ENCODE measurements at regions of chr5 and their contacts with region 1.

Region 1: DNA sequence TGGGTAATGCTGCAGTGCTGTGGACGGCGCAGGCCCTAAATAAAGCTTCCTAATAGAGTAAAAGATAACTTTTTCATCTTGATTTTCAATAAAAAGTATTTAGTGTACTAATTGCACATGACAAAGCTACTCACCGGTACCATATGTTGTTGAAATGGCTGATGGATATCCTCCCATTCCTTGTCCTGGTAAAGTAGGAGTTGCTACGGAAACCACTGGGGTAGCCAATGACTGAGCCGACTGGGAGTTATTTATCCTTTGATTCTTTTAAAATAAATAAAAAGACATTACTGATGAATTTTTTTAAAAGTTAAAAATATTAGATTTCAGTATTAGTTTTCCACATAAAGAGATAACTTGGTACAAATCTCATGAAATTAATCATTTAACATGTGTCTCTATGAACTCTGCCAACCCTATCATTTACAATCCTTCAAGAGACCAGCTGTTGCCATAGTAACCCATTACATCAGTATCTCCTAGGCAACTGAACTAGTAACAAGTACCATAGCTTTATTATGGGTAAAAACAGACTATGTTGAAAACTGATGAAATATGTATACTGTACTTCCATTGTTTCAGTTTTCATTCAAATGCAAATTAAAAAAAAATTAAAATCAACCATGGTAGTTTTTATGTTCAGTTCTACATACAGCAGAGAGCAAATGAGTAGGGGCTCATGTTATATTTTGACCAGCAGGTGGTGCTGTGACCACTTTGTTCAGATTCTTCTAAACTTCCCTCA is 153.7 kb downstream of the MEF2C start:
- DNase-seq: peak; percentile 43 to 82 (median 58)
- ATAC-seq: peak; percentile 86
- H3K4me3 ChIP-seq: no peak overlapping the region
- H3K27ac ChIP-seq: no peak overlapping the region
- H3K4me1 ChIP-seq: peaks cover 0 to 4% of the 10 kb centered on the region in 2 experiments; a peak in 1 of 5 replicates
- H3K27me3 ChIP-seq: no peaks in the 10 kb centered on the region
- CTCF ChIP-seq: peak; percentile 41 to 78 (median 63); a peak in 5 of 6 replicates
- EP300 ChIP-seq: no peak
- POLR2A ChIP-seq: no peak
- RAD21 ChIP-seq: peak; percentile 87 to 89

Region 2: DNA sequence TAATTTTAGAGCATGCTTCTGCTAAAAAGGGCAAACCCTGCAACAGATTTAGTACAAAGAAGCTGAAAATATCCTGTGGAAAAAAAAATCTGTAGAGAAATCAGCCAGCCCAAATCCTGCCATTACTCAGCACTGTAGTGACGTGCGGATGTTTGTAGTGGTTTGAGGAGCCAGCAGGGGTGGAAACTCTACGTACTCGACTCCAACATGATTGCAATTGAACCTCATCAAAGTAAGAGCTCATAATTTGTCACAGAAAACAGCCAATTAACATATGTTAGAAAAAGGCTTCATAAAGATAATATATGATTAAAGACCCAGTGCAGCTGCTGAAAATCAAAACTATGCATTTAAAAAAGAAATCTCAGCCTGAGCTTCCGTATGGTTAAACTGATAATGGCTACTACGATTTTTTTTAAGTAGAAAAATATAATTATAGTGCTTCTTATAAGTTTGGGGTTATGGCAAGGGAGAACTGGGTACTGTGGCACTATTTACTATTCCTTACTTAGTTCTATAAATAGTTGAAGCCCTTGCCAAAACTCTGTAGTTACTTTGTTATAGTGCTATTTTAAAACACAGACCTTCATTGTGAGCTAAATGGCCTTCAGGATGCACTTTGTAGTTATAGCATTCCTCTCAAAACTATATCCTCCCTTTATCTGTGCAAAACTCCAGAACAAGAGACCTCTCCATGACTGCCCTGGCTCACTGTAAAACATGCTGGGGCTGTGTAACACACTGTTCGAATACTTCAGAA is 104.3 kb after region 1 on chr5:
- CTCF ChIA-PET with region 1: no interaction called
- POLR2A ChIA-PET with region 1: no interaction called
- in situ Hi-C with region 1: no loop called
- intact Hi-C with region 1: loop called (anchors 10 kb)
- DNase-seq: no peak
- ATAC-seq: no peak
- H3K4me3 ChIP-seq: no peak overlapping the region
- H3K27ac ChIP-seq: no peak overlapping the region
- H3K4me1 ChIP-seq: peaks cover 0 to 10% of the 10 kb centered on the region in 2 experiments; a peak in 2 of 5 replicates
- H3K27me3 ChIP-seq: no peaks in the 10 kb centered on the region
- CTCF ChIP-seq: no peak
- EP300 ChIP-seq: no peak
- POLR2A ChIP-seq: no peak
- RAD21 ChIP-seq: no peak

Region 3: DNA sequence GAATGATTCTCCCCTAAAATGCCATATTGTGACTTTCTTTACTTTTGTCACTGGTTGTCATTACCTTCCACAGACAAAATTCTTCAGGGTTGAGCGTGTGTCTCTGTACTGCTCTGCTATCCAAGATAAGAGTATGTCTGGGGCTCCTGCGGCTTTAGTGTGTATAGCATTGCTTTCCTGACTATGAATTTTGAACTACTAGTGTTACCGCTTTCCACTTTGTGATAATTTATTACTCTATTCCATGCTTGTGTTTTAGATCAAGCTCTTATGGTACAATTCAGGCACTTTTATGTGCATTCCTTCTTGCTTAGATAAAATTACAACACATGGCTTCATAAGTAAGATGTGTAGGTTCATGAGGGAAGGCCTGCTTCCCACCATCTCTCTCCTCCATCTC is 205.2 kb after region 1 on chr5:
- CTCF ChIA-PET with region 1: no interaction called
- POLR2A ChIA-PET with region 1: no interaction called
- in situ Hi-C with region 1: no loop called
- intact Hi-C with region 1: loop called (anchors 10 kb)
- DNase-seq: peak in 2 of 4 experiments; percentile 48 to 76
- ATAC-seq: peak; percentile 95
- H3K4me3 ChIP-seq: no peak overlapping the region
- H3K27ac ChIP-seq: peak overlapping the region; percentile 16; the same call in 1 of the 3 replicates
- H3K4me1 ChIP-seq: peaks cover 3 to 17% of the 10 kb centered on the region in 2 experiments; a peak in 3 of 5 replicates
- H3K27me3 ChIP-seq: no peaks in the 10 kb centered on the region
- CTCF ChIP-seq: no peak
- EP300 ChIP-seq: no peak; the same call in 1 of the 2 replicates
- POLR2A ChIP-seq: no peak
- RAD21 ChIP-seq: peak in 1 of 2 experiments; percentile 19; a peak in 3 of 4 replicates

Region 4: DNA sequence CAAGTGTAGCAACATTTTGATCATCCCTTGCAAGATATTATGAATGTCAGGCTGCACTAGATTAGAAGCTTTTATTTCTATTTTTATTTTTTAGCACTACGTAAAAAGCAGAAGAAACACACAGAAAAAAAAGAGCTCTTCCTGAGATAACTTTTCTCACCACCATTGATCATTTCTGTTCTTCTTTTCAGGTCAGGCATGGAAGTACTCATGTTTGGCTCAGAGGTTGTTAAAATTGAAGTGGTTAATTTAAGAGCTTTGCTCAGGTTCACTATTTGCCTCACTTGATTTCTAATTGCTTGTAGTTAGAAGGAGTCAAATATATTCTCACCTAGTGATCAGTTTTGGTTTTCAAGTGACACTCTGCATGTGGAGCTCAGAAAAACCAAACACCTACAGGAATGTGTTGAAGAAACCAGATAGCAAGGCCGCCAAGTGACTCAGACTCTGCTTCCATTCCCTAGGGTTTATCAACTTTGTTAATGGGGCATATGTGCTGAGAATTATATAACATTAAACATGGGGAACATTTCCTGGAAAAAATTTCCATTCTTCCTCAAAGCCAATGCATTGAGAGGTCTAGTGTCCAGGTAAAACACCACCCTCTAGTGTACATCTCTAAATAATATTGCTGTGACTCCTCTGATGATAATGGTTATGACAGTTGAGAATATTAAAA is 1000.5 kb after region 1 on chr5:
- CTCF ChIA-PET with region 1: interaction called, 3 read pairs
- POLR2A ChIA-PET with region 1: no interaction called
- in situ Hi-C with region 1: no loop called
- intact Hi-C with region 1: loop called (anchors 5 kb)
- DNase-seq: peak in 2 of 4 experiments; percentile 4 to 5
- ATAC-seq: 0 out of 3 replicates have a peak, but pooled peaks have one; percentile 44
- H3K4me3 ChIP-seq: no peak overlapping the region
- H3K27ac ChIP-seq: no peak overlapping the region
- H3K4me1 ChIP-seq: no peaks in the 10 kb centered on the region
- H3K27me3 ChIP-seq: no peaks in the 10 kb centered on the region
- CTCF ChIP-seq: peak in 1 of 3 experiments; percentile 36; a peak in 2 of 6 replicates
- EP300 ChIP-seq: no peak
- POLR2A ChIP-seq: no peak
- RAD21 ChIP-seq: peak; percentile 65 to 77

Region 5: DNA sequence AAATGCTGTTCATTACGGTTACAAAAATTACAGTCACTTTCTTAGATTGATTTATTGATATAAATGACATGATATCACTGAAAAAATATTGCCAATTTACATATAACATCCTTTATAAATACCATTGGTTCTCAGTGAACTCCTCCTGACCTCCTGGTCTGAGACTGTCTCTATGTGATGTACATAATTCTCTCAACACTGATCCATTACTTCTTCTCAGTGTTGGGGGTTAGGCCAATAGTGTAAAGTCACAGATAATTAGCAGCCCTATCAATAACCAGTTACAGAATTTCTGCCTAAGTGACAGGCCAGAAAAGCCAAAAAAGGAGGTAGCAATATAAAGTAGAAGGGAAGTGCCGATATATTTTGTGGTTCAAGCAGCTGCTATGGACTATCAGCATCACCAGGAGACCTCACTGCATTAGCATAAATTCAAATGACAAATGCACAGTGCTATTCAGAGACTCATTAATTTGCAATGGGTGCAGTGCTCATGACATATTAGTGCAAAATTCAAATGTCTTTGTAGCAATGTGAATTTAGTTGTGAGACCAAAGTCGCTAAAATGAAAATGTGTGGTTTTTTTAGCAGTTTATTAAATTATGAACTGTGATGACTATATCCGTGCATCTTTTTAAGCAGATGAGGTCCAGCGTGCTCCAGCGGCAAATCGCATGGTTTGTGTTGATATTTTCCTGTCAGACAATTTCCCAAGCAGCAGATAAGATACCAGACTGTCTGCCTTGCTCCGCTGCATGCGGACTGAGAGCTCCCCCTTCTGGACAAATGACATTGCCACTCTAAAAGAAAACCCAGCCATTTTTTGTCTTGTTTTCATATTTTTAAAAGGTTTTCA is 1535.7 kb after region 1 on chr5:
- CTCF ChIA-PET with region 1: interaction called, 13 read pairs
- POLR2A ChIA-PET with region 1: no interaction called
- in situ Hi-C with region 1: loop called (anchors 25 kb)
- intact Hi-C with region 1: loop called (anchors 1 kb)
- DNase-seq: peak; percentile 34 to 82 (median 46)
- ATAC-seq: peak; percentile 87
- H3K4me3 ChIP-seq: no peak overlapping the region
- H3K27ac ChIP-seq: no peak overlapping the region
- H3K4me1 ChIP-seq: no peaks in the 10 kb centered on the region
- H3K27me3 ChIP-seq: no peaks in the 10 kb centered on the region; a peak in 1 of 5 replicates
- CTCF ChIP-seq: peak; percentile 84 to 95 (median 90)
- EP300 ChIP-seq: no peak
- POLR2A ChIP-seq: no peak
- RAD21 ChIP-seq: peak; percentile 93